SK-N-SH (cell line): ENCODE measurements at regions of chr7 and their contacts with region 1.

Region 1: DNA sequence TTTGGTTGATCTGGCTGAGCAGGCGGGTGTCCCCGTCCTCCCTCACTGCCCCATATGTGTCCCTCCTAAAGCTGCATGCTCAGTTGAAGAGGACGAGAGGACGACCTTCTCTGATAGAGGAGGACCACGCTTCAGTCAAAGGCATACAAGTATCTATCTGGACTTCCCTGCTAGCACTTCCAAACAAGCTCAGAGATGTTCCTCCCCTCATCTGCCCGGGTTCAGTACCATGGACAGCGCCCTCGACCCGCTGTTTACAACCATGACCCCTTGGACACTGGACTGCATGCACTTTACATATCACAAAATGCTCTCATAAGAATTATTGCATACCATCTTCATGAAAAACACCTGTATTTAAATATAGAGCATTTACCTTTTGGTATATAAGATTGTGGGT is 26.9 kb upstream of the TRIM56 start:
- DNase-seq: no peak
- H3K4me3 ChIP-seq: no peak overlapping the region
- H3K27ac ChIP-seq: no peak overlapping the region
- H3K4me1 ChIP-seq: no peaks in the 10 kb centered on the region
- H3K27me3 ChIP-seq: peaks cover 87% of the 10 kb centered on the region
- CTCF ChIP-seq: no peak
- EP300 ChIP-seq: no peak
- RAD21 ChIP-seq: no peak

Region 2: DNA sequence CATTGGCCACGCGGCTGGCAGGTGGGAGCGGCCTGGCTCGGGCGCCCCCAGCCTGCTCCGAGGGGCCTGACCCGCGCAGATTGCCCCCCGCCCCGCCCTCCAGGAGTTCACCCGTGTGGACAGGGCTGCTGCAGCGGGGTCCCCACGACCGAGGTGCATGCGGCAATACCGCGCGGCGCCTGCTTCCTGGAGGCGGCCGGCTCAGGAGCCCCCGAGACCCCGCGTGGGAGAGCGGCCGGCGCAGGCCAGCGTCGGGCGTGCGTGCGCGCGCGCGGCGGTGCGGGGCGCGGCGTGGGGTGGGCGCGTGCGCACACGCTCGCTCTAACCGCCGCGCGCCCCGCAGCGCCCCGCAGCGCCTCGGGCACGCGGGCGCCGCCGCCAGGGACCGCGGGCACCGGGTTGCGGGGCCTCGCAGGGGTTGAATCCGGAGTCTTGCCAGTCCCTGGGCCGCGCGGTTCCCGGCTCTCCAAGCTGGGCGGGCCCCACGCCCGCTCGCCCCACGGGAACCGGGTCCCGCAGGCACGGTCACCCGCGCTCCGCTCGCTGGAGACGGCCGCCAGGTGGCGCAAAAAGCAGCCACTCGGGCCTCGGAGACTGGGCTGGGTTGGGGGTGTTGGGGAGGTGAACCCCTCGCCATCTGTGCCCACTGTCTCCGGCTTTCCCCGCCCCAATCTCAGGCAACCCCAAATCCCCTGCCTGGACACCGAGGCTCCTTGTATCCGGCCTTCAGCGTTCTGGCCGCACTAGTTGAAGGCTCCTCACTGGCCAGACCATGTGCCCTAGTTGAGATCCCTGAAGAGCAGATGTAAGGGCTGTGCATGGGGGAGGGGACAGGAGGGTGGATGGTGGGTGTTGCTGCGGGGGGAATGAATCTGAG is 161.4 kb before region 1 on chr7:
- CTCF ChIA-PET with region 1: interaction called, 122 read pairs
- POLR2A ChIA-PET with region 1: no interaction called
- DNase-seq: peak; percentile 87
- H3K4me3 ChIP-seq: peak overlapping the region; percentile 39 to 61; a peak in 3 of 4 replicates
- H3K27ac ChIP-seq: no peak overlapping the region
- H3K4me1 ChIP-seq: peaks cover 7 to 9% of the 10 kb centered on the region in 2 experiments; a peak in 2 of 4 replicates
- H3K27me3 ChIP-seq: peaks cover 54% of the 10 kb centered on the region
- CTCF ChIP-seq: peak; percentile 95
- EP300 ChIP-seq: no peak
- RAD21 ChIP-seq: peak; percentile 60

Region 3: GRCh38 chr7:100914879-100915447 is 143.4 kb before region 1 on chr7:
- CTCF ChIA-PET with region 1: interaction called, 14 read pairs
- POLR2A ChIA-PET with region 1: no interaction called
- DNase-seq: no peak
- H3K4me3 ChIP-seq: no peak overlapping the region
- H3K27ac ChIP-seq: no peak overlapping the region
- H3K4me1 ChIP-seq: no peaks in the 10 kb centered on the region
- H3K27me3 ChIP-seq: peaks cover 36% of the 10 kb centered on the region; the same call in 1 of the 2 replicates
- CTCF ChIP-seq: no peak
- EP300 ChIP-seq: no peak
- RAD21 ChIP-seq: no peak

Region 4: GRCh38 chr7:100965723-100966541 is 92.4 kb before region 1 on chr7:
- CTCF ChIA-PET with region 1: interaction called, 21 read pairs
- POLR2A ChIA-PET with region 1: no interaction called
- DNase-seq: peak; percentile 99
- H3K4me3 ChIP-seq: peak overlapping the region; percentile 23 to 54; a peak in 3 of 4 replicates
- H3K27ac ChIP-seq: no peak overlapping the region
- H3K4me1 ChIP-seq: peaks cover 0 to 7% of the 10 kb centered on the region in 2 experiments; a peak in 1 of 4 replicates
- H3K27me3 ChIP-seq: peaks cover 96% of the 10 kb centered on the region
- CTCF ChIP-seq: peak; percentile 89
- EP300 ChIP-seq: no peak
- RAD21 ChIP-seq: peak; percentile 65

Region 5: GRCh38 chr7:101018271-101019167 is 39.8 kb before region 1 on chr7:
- CTCF ChIA-PET with region 1: interaction called, 14 read pairs
- POLR2A ChIA-PET with region 1: no interaction called
- DNase-seq: no peak
- H3K4me3 ChIP-seq: no peak overlapping the region
- H3K27ac ChIP-seq: no peak overlapping the region
- H3K4me1 ChIP-seq: peaks cover 4% of the 10 kb centered on the region in 2 experiments; a peak in 2 of 4 replicates
- H3K27me3 ChIP-seq: peaks cover 16% of the 10 kb centered on the region
- CTCF ChIP-seq: no peak
- EP300 ChIP-seq: no peak
- RAD21 ChIP-seq: no peak